ENCODE measurements at regions of chr2 and their contacts with region 1.

Region 1: DNA sequence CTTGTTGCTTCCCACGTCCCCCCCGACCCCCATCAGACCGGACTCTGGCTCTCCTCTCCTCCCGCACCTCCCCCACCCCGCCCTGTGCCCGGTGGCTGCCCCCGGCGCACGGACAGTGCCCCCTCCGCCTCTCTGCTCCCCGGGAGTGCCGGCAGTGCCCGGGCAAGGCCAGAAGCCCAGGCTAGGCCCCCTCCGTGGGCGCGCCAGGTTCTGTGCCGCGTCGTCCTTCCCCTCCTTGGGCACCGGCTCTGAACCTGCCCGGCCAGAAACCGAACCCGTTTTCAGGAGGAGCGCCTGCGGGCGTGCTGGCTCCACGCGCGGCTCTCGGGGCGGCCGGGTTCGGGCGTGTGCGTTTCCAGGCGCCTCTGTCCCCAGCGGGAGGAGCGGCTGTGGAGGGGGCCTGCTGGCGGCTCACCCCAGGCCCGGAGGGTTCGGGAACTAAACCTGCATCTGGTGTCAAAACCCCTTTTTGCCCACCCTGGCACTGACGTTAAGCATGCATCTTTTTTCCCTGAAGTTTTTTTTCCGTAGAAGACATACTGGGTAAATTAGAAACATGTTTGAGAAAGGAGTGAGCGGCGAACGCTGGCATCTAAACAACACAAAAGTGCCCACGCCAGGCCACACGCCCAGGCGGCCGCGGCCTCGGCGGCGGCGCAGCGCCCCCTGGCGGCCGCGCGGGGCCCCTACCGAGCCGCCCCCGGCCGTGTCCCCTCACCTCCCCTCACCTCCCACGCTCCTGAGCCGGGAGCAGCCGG is 123.9 kb upstream of the SLC1A4 start:
- DNase-seq: peak; percentile 82
- ATAC-seq: peak; percentile 91

Region 2: GRCh38 chr2:64523666-64524603 is 341.3 kb before region 1 on chr2 and contains the start of gene AFTPH:
- intact Hi-C with region 1: loop called (anchors 5 kb)
- DNase-seq: peak; percentile 99
- ATAC-seq: peak; percentile 99
- total RNA-seq, gene AFTPH: 12.3 TPM

Region 3: GRCh38 chr2:64595397-64596160 is 269.7 kb before region 1 on chr2:
- intact Hi-C with region 1: loop called (anchors 5 kb)
- DNase-seq: no peak
- ATAC-seq: peak; percentile 31

Region 4: GRCh38 chr2:64644177-64645004 is 220.9 kb before region 1 on chr2:
- intact Hi-C with region 1: loop called (anchors 2 kb)
- DNase-seq: peak; percentile 89
- ATAC-seq: peak; percentile 89

Measured in Right ventricle myocardium superior (tissue), 1 donor.